ENCODE measurements at regions of chr4 and their contacts with region 1.

Region 1: GRCh38 chr4:6986781-6987587 is 56.2 kb upstream of the TADA2B start:
- DNase-seq: peak; percentile 97
- H3K4me3 ChIP-seq: peak overlapping the region; percentile 59 to 90 (median 82)
- H3K27ac ChIP-seq: peak overlapping the region; percentile 88 to 95 (median 94)
- H3K4me1 ChIP-seq: peaks cover 0 to 63% (median 50%) of the 10 kb centered on the region in 4 donors
- H3K27me3 ChIP-seq: no peaks in the 10 kb centered on the region
- CTCF ChIP-seq: no peak
- EP300 ChIP-seq: no peak
- POLR2A ChIP-seq: peak; percentile 60 to 80

Region 2: DNA sequence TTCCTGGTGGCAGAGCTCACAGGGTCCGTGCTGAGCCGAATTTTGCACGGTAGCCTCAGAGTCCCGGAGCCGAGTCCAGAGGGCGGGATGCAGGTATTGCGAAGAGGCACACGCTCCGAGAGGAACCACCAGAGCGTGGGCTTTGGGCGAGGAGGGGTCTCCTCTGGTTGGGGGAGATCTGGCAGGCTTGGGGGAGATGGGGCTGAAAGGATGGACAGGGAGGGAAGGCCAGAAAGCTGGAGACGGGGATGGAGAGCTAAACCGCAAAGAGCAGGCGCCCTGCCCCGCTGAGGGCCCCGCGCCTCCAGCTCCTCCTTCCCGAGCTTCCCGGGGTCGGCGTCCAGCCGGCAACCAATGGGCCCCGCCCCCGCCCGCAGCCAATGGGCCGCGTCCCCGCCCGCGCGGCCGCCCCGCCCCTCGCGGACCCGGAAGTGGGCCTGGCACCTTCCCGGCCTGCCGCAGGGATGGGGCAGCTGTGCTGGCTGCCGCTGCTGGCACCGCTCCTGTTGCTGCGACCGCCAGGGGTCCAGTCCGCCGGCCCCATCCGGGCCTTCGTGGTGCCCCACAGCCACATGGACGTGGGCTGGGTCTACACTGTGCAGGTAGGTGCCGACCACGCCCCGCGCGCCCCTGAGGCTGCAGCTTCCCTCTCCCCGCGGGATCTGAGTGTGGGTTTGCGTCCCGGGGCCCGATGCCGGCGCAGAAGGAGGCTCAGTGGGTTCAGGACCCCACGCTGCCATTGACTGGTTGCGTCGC is 412.1 kb before region 1 on chr4 and contains the start of gene MAN2B2:
- intact Hi-C with region 1: loop called (anchors 10 kb)
- DNase-seq: peak; percentile 93
- H3K4me3 ChIP-seq: peak within 1 kb of the TSS; percentile 71 to 93 (median 86)
- H3K27ac ChIP-seq: peak within 1 kb of the TSS; percentile 74 to 81 (median 76)
- H3K4me1 ChIP-seq: peaks cover 0 to 24% (median 17%) of the 10 kb centered on the region in 4 donors
- H3K27me3 ChIP-seq: no peaks in the 10 kb centered on the region
- CTCF ChIP-seq: no peak
- EP300 ChIP-seq: no peak
- POLR2A ChIP-seq: peak in 1 of 2 donors; percentile 32
- total RNA-seq, gene MAN2B2: 12.7 to 24.3 (median 20.2) TPM

Region 3: DNA sequence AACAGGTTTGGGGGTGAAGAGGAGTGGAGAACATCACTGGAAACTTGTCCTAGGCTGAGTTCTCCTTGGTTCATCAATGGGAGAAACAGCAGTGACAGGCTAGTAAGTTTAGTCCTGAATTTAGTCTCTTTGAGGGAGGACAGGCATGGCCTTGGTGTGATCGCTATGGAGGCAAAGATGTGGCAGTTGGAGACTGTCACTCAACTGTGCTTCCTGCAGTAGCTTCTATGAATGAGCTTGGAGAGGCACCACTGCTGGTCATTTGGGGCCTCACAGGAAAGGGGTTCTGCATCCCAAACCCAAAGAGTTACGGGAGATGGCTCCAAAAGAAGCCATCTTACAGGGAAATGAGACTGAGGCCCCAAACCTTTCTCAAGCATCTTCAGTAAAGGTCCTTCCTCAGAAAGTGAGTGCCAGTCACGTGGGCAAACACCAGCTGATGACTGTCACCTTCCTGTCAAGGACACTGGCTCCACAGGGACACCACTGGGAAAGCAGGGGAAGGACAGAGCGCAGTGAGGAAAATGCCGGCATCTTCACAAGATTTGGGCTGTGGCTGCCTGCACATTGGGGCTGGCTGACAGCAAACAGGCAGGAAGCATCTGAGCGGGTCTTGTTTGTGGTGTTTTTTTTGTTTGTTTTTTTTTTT is 339.3 kb before region 1 on chr4:
- intact Hi-C with region 1: loop called (anchors 5 kb)
- DNase-seq: no peak
- H3K4me3 ChIP-seq: no peak overlapping the region
- H3K27ac ChIP-seq: no peak overlapping the region
- H3K4me1 ChIP-seq: peaks cover 0 to 11% (median 10%) of the 10 kb centered on the region in 4 donors
- H3K27me3 ChIP-seq: no peaks in the 10 kb centered on the region
- CTCF ChIP-seq: no peak
- EP300 ChIP-seq: no peak
- POLR2A ChIP-seq: no peak

Region 4: DNA sequence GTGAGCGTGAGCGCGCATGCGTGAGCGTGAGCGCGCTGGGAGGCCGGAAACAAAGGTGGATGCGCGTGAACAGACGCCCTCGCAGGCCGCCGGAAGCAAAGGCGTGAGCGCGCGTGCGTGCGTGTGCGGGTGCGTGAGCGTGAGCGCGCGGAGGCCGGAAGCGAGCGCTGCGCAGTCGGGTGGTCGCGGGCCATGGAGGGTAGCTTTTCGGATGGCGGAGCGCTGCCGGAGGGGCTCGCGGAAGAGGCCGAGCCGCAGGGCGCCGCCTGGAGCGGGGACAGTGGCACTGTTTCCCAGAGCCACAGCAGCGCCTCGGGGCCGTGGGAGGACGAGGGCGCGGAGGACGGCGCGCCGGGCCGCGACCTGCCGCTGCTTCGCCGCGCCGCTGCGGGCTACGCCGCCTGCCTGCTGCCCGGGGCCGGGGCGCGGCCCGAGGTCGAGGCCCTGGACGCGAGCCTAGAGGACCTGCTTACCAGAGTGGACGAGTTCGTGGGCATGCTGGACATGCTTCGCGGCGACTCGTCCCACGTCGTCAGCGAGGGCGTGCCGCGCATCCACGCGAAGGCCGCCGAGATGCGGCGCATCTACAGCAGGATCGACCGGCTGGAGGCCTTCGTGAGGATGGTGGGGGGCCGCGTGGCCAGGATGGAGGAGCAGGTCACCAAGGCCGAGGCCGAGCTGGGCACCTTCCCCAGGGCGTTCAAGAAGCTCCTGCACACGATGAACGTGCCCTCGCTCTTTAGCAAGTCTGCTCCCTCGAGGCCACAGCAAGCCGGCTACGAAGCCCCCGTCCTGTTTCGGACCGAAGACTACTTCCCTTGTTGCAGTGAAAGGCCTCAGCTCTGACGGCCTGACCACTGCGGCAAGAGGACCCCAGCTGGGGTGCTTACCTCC is 270.7 kb before region 1 on chr4 and contains the start of gene BLOC1S4:
- intact Hi-C with region 1: loop called (anchors 5 kb)
- DNase-seq: peak; percentile 94
- H3K4me3 ChIP-seq: peak within 1 kb of the TSS; percentile 61 to 81 (median 70)
- H3K27ac ChIP-seq: peak within 1 kb of the TSS; percentile 88 to 94 (median 92)
- H3K4me1 ChIP-seq: peaks cover 0 to 34% (median 28%) of the 10 kb centered on the region in 4 donors
- H3K27me3 ChIP-seq: no peaks in the 10 kb centered on the region
- CTCF ChIP-seq: no peak
- EP300 ChIP-seq: no peak
- POLR2A ChIP-seq: peak; percentile 47 to 67
- total RNA-seq, gene BLOC1S4: 9.1 to 19.7 (median 14.6) TPM

Region 5: GRCh38 chr4:6909073-6909965 is 77.7 kb before region 1 on chr4 and contains the start of gene TBC1D14:
- intact Hi-C with region 1: loop called (anchors 1 kb)
- DNase-seq: peak; percentile 95
- H3K4me3 ChIP-seq: peak within 1 kb of the TSS; percentile 76 to 88 (median 84)
- H3K27ac ChIP-seq: peak within 1 kb of the TSS; percentile 96 to 99 (median 98)
- H3K4me1 ChIP-seq: peaks cover 0 to 30% (median 26%) of the 10 kb centered on the region in 4 donors
- H3K27me3 ChIP-seq: no peaks in the 10 kb centered on the region
- CTCF ChIP-seq: no peak
- EP300 ChIP-seq: no peak
- POLR2A ChIP-seq: no peak
- total RNA-seq, gene TBC1D14: 26.3 to 46.4 (median 32.6) TPM

Region 6: DNA sequence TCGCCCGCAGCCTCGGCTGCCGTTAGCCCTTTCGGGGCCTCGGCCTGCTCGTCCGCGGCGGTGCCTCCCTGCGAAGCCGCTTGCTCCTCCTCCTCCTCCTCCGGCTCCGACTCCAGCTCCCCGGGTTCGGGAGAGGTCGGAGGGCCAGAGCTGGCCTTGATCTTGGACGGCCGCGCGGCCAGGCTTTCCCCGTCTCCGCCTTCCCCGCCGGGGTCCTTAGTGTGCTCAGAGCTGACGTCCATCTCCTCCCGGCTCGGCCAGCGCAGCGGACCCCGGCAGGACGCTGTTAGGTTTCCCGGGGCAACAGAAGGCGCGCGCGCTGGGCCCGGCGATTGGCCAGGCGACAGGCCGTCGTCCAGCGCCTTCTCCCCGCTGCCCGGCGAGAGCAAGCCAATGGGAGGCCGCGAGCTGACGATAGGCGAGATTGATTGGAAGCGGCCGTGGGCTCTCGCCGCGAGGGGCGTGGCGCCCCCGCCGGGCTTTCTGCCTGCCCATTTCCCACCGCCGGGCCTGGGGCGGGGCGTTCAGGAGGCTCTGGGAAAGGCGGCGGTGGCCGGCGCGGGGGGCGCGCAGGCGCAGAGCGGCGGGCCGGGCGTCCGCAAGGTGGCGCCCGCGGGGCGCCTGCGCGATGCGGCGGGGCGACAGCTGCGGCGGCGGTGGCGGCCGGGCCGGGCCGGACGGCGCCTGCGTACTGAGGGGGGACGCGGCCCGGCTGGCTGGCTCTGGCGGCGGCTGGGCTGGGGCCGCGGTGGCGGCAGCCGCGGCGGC is 55.9 kb after region 1 on chr4 and contains the start of gene TADA2B:
- intact Hi-C with region 1: loop called (anchors 1 kb)
- DNase-seq: peak; percentile 99
- H3K4me3 ChIP-seq: peak within 1 kb of the TSS; percentile 86 to 99 (median 98)
- H3K27ac ChIP-seq: peak within 1 kb of the TSS; percentile 91 to 95 (median 92)
- H3K4me1 ChIP-seq: peaks cover 0 to 51% (median 47%) of the 10 kb centered on the region in 4 donors
- H3K27me3 ChIP-seq: no peaks in the 10 kb centered on the region
- CTCF ChIP-seq: peak in 1 of 4 experiments; percentile 30
- EP300 ChIP-seq: no peak
- POLR2A ChIP-seq: no peak
- total RNA-seq, gene TADA2B: 15.0 to 22.7 (median 17.2) TPM

Region 7: DNA sequence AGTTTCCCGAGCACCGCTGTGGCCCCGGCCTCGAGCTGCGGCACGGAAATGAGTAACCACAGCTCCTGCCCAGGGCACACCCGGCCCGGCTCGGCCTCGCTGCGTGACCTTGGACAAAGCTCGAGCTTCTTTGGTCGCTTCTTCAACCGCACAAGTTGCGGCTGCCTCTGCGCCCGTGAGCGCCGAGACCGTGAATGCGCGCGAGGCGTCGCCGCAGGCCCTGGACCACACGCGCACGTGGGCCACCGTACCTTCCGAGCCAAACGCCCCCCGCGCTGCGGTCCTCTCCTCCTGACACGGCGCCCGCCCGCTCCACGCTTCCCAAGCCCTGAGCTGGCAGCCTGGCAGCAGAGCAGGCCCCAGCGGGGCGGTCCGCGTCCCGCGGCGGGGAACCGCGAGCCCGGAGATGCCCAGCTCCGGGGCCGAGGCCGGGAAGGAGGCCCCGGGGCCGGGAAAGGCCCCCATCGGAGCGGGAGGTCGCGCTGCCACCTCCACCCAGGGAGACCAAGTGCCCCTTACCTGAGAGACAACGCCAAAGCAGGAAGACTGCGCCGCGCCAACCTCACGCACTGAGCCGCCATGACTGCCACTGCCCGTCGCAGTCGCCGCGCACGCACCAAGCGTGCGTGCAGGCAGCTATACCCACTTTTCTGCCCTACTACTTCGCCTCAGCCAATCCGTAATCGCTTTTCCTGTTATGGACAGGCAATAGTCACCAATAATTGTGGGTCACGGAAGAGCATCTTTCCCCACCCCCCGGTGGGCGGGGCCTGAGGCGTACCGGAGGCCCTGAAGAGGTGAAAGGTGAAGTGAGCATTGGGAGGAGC is 80.7 kb after region 1 on chr4 and contains the start of gene GRPEL1:
- intact Hi-C with region 1: loop called (anchors 2 kb)
- DNase-seq: peak; percentile 100
- H3K4me3 ChIP-seq: peak within 1 kb of the TSS; percentile 56 to 99 (median 90)
- H3K27ac ChIP-seq: peak within 1 kb of the TSS; percentile 88 to 95 (median 92)
- H3K4me1 ChIP-seq: peaks cover 0 to 39% (median 28%) of the 10 kb centered on the region in 4 donors
- H3K27me3 ChIP-seq: no peaks in the 10 kb centered on the region
- CTCF ChIP-seq: no peak
- EP300 ChIP-seq: no peak
- POLR2A ChIP-seq: peak; percentile 93 to 95
- total RNA-seq, gene GRPEL1: 7.5 to 23.2 (median 15.0) TPM

Measured in sigmoid colon (tissue), 7 donors.